ENCODE measurements at regions of chr1 and their contacts with region 1.

Region 1: DNA sequence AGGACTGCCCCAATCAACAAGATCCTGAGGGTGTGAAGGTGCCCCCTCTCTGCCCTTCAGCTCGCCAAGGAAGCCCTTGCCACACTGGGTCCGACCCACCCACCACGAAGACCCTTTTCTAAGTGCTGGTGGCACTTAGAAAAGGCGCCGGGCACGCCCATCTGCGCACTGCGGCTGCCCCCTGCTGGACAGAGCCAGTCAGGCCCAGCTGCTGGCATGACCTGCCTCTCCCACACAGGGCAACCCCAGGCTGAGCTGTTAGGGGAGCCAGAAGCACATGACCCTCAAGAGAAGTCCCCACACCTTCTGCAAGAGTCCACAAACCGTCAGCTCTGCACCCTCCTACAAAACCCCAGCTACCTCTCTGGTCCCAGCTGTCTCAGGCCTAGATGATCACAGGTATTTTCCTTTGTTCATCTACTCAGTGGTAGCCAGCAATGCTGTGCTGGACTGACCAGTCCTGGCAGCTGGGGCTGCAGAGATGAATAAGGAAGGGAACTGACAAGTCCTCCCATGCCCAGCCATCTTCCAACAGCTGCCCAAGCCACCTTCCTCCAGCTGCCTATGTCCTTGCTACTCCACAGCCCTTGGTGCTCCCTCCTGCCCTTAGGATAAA is 40.0 kb upstream of the ZC3H12A start:
- DNase-seq: peak; percentile 57 to 97 (median 82)

Region 2: DNA sequence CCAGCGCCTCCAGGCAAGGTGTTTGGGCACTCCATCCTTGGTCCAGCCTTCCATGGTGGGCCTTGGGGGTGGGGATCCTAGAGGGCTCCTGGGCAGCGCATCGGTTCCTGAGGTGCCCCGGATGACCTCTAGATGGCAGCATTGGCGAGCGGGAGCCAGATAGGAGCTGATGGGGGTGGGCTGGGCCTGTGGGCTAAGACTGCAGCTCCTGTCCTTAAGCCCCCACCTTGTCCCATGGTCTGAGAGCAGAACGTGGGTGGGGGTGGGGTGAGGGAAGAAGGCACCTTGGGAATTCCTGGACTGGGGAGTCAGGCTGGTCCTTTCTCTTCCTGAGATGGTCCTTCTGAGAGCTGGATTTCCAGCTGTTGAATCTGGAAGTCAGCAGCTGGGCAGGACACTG is 858.3 kb before region 1 on chr1:
- intact Hi-C with region 1: loop called (anchors 10 kb)
- DNase-seq: peak; percentile 18 to 94 (median 70)

Region 3: DNA sequence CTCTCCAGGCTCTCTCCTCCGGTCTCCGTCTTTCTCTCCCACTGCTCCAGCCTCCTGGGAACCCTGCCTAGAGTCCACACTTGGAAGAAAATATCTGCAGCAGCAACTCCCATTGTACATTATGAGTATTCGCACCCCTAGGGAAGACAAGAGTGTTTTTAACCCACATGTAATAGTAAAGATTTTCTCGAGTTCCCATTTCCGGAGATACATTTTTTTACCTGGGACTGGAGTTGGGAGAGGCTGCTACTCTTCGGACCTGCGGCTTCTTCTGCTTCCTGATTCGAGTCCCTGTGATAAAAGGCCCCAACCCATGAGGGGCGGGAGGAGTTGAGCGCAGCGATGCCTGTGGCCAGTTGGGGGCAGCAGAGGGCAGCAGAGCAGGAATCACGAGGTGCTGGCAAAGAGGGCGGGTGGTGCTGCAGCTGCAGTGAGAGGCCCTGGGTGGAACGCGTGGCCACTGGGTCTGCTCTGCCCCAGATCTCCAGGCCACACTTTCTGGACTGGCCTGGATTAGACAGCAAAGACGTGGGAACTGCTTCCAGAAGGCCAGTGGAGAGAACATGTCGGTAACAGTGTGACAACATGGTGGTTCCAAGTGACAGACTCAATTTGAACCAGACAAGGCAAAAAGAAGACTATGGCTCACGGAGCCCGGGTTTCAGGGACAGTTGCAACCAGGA is 730.7 kb before region 1 on chr1:
- intact Hi-C with region 1: loop called (anchors 10 kb)
- DNase-seq: peak; percentile 75 to 98 (median 88)

Region 4: GRCh38 chr1:37038227-37039076 is 395.9 kb before region 1 on chr1:
- intact Hi-C with region 1: loop called (anchors 10 kb)
- DNase-seq: peak; percentile 44 to 96 (median 76)

Region 5: DNA sequence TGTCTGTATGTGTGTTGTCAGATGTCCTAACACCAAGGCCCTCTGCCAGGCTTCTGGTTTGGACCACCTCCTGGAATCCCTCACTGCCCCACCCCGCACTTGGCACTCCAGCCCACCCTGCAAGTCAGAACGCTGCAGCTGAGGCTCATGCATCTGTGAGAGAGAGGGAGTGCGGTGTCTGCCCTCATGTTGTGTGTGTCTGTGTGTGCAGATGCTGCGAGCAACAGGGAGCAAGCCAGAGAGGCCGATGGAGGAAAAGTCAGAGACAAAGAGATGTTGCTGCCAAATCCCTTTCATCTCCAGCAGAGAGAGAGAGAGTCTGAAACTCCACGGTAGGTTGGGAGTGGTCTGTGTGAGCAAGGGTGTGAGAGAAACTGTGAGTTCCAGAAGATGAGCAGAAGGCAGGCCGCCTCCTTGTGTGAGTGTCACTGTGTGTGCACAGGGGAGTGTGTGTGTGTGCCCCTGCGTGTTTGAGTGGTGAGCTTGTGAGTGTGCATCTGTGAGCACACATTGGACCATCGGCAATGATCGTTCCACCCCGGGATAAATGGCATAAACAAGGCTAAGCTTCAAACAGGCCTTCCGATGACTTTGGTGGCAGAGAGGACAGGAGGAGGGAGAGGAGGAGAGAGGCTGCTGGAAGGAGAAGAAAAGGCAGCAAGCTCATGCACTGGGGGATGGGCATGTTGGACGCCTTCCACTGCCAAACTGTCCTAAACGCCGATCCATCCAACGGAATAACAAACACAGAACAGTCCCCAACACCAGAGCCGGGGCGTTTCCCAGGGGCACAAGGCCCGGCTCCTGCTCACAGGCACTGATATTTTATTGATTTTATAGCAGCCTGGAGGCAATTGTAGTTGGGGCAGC is 300.9 kb before region 1 on chr1:
- intact Hi-C with region 1: loop called (anchors 10 kb)
- DNase-seq: peak in 6 of 10 donors; percentile 34 to 89 (median 47)

Region 6: GRCh38 chr1:37317870-37318467 is 116.4 kb before region 1 on chr1:
- intact Hi-C with region 1: loop called (anchors 10 kb)
- DNase-seq: peak in 1 of 10 donors; percentile 52

Measured in posterior cingulate gyrus (tissue), 11 donors.